ENCODE measurements at regions of chr17 and their contacts with region 1.

Region 1: GRCh38 chr17:54968262-54968987 is at the starts of genes COX11 and STXBP4:
- DNase-seq: peak; percentile 93
- H3K4me3 Mint-ChIP-seq: no peak within 1 kb of the TSS
- H3K27ac Mint-ChIP-seq: no peak within 1 kb of the TSS
- H3K4me1 Mint-ChIP-seq: peaks cover 20% of the 10 kb centered on the region
- H3K27me3 Mint-ChIP-seq: no peaks in the 10 kb centered on the region
- total RNA-seq, gene COX11: 45.0 and 51.3 TPM in 2 replicates
- total RNA-seq, gene STXBP4: 5.1 and 7.3 TPM in 2 replicates

Region 2: DNA sequence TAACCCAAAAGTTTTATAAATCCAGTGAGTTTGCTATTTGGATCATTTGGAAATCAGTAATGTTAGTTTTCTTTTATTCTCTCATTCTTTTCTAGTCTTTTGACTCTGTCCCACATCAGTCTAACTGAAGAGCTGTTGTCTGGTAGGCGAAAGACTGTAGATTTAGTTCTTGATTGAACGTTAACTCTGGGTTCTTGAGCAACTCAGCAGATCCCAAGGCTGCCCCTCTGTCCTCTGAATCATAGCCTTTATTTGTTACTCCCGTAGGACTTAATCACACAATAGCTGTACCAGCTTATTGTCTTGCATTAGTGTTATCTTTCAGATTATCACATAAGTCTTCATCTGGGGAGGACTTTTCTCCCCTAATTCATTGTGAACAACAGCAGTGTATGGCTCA is 187.0 kb before region 1 on chr17:
- intact Hi-C with region 1: no loop called
- DNase-seq: no peak
- H3K4me3 Mint-ChIP-seq: no peak overlapping the region
- H3K27ac Mint-ChIP-seq: no peak overlapping the region
- H3K4me1 Mint-ChIP-seq: no peaks in the 10 kb centered on the region
- H3K27me3 Mint-ChIP-seq: no peaks in the 10 kb centered on the region

Region 3: DNA sequence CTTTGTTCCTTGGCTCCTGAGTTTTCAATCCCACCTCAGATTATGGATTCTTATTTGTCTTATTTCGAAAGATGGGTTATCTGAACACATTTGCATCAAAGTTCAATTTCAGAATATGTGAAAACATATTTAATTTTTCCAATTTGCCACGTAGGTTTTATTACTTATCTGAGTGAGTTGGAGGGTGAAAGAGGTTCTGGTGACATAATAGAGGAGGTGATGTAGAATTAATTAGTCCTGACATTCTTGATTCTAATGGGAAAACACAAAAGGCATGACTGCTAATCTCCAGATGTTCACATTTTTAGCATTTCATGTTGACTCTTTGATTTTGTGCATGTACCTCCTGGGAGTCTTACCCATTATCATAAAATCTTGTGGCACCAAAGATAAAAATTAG is 58.7 kb before region 1 on chr17:
- intact Hi-C with region 1: no loop called
- DNase-seq: no peak
- H3K4me3 Mint-ChIP-seq: no peak overlapping the region
- H3K27ac Mint-ChIP-seq: no peak overlapping the region
- H3K4me1 Mint-ChIP-seq: no peaks in the 10 kb centered on the region
- H3K27me3 Mint-ChIP-seq: peaks cover 5% of the 10 kb centered on the region

Region 4: DNA sequence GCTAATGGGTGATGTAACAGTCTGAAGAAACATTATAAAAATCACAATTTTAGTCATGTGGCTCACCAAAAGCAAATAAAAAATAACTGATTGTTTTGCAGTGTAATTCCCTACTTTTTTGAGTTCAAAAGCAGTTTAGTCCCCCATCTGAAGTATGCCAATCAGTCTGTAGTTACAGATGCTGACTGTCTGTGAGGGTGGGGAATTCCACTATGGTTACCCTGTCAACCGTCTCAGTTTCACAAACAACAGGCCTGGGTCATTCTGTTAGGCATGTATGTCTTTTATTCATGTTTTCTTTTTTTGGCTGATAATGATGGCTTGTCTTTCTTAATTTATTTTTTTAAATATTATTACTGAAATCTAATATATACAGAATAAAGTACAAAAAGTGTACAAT is 69.4 kb after region 1 on chr17:
- intact Hi-C with region 1: loop called (anchors 1 kb)
- DNase-seq: peak; percentile 45
- H3K4me3 Mint-ChIP-seq: no peak overlapping the region
- H3K27ac Mint-ChIP-seq: no peak overlapping the region
- H3K4me1 Mint-ChIP-seq: peaks cover 32% of the 10 kb centered on the region
- H3K27me3 Mint-ChIP-seq: no peaks in the 10 kb centered on the region

Region 5: GRCh38 chr17:55264645-55265298 is 296.3 kb after region 1 on chr17 and contains the start of gene HLF:
- intact Hi-C with region 1: loop called (anchors 1 kb)
- DNase-seq: peak; percentile 72
- H3K4me3 Mint-ChIP-seq: peak within 1 kb of the TSS; percentile 69
- H3K27ac Mint-ChIP-seq: no peak within 1 kb of the TSS
- H3K4me1 Mint-ChIP-seq: peaks cover 14% of the 10 kb centered on the region
- H3K27me3 Mint-ChIP-seq: peaks cover 81% of the 10 kb centered on the region
- total RNA-seq, gene HLF: 0.36 and 0.54 TPM in 2 replicates

Region 6: DNA sequence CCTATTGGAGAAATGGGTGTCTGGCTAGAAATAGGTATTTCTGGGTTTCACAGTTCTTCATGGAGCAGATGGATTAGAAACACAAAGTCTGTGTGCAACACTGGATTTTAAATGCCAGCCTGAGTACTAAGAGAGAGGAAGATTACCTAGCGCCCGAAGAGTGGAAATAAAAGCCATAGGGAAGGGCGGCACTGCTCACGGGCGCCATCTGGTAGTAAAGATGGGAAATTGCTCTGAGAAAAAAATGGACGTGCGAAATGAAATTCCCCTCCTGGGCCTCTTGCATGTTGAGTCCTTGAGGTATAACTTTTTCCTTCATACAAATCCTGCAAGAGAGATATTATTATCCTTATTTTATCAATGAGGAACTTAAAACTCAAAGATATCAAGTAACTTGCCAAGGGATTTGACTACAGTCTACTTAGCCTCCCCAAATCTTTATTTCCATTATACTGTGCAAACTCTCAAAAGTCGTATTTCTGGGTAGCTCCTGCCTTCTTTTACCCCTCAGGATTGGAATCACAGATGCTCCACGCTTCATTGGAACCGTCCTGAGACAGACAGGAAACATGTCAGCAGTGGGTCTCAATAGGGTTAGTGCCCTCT is 380.4 kb after region 1 on chr17:
- intact Hi-C with region 1: loop called (anchors 1 kb)
- DNase-seq: peak; percentile 12
- H3K4me3 Mint-ChIP-seq: no peak overlapping the region
- H3K27ac Mint-ChIP-seq: no peak overlapping the region
- H3K4me1 Mint-ChIP-seq: peaks cover 41% of the 10 kb centered on the region
- H3K27me3 Mint-ChIP-seq: peaks cover 15% of the 10 kb centered on the region

Region 7: GRCh38 chr17:55735731-55736405 is 767.4 kb after region 1 on chr17:
- intact Hi-C with region 1: loop called (anchors 1 kb)
- DNase-seq: peak; percentile 6
- H3K4me3 Mint-ChIP-seq: no peak overlapping the region
- H3K27ac Mint-ChIP-seq: no peak overlapping the region
- H3K4me1 Mint-ChIP-seq: peaks cover 21% of the 10 kb centered on the region
- H3K27me3 Mint-ChIP-seq: peaks cover 14% of the 10 kb centered on the region